ENCODE measurements at regions of chr14 and their contacts with region 1.

Region 1: GRCh38 chr14:35121887-35122695 is at the starts of genes PPP2R3C and PRORP:
- DNase-seq: peak; percentile 80 to 96 (median 93)
- ATAC-seq: peak; percentile 90
- H3K4me3 ChIP-seq: peak within 1 kb of the TSS; percentile 86
- H3K4me3 Mint-ChIP-seq: peak within 1 kb of the TSS; percentile 89 to 100 (median 99)
- H3K27ac ChIP-seq: peak within 1 kb of the TSS; percentile 97
- H3K27ac Mint-ChIP-seq: peak within 1 kb of the TSS; percentile 99 to 100 (median 100)
- H3K4me1 ChIP-seq: peaks cover 16 to 22% of the 10 kb centered on the region in 2 donors
- H3K4me1 Mint-ChIP-seq: peaks cover 39 to 85% (median 73%) of the 10 kb centered on the region in 7 donors
- H3K27me3 ChIP-seq: no peaks in the 10 kb centered on the region
- H3K27me3 Mint-ChIP-seq: peaks cover 0 to 3% (median 0%) of the 10 kb centered on the region in 5 donors
- total RNA-seq, gene PPP2R3C: 31.4 to 43.3 (median 33.5) TPM
- total RNA-seq, gene PRORP: 31.2 to 40.9 (median 38.4) TPM

Region 2: GRCh38 chr14:34539407-34540180 is 582.5 kb before region 1 on chr14 and contains the start of gene EAPP:
- CTCF ChIA-PET with region 1: no interaction called
- POLR2A ChIA-PET with region 1: no interaction called
- intact Hi-C with region 1: loop called (anchors 5 kb)
- DNase-seq: peak; percentile 84 to 95 (median 91)
- ATAC-seq: peak; percentile 100
- H3K4me3 ChIP-seq: peak within 1 kb of the TSS; percentile 100
- H3K4me3 Mint-ChIP-seq: peak within 1 kb of the TSS; percentile 95 to 99 (median 99)
- H3K27ac ChIP-seq: peak within 1 kb of the TSS; percentile 97
- H3K27ac Mint-ChIP-seq: peak within 1 kb of the TSS; percentile 95 to 100 (median 99)
- H3K4me1 ChIP-seq: peaks cover 18 to 24% of the 10 kb centered on the region in 2 donors
- H3K4me1 Mint-ChIP-seq: peaks cover 5 to 45% (median 31%) of the 10 kb centered on the region in 7 donors
- H3K27me3 ChIP-seq: no peaks in the 10 kb centered on the region
- H3K27me3 Mint-ChIP-seq: no peaks in the 10 kb centered on the region
- total RNA-seq, gene EAPP: 34.8 to 84.3 (median 60.9) TPM

Region 3: DNA sequence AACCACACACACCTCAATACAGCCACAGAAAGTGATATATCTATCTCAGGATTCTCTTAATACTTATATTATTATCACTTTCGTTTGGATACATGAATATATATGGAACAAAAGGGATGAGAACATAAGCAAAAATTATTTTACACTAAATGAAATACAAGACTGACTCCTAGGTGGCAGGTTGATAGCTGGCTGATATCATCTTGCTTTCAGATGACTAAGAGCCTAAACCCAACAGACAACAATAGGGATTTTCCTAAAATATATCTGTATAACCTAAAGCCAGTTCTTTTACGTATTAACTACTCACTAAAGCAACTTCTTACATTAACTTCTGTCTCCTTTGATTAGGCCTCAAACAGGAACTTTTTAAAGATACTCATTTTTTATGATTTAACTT is 312.1 kb before region 1 on chr14:
- CTCF ChIA-PET with region 1: no interaction called
- POLR2A ChIA-PET with region 1: no interaction called
- intact Hi-C with region 1: no loop called
- DNase-seq: no peak
- ATAC-seq: no peak
- H3K4me3 ChIP-seq: no peak overlapping the region
- H3K4me3 Mint-ChIP-seq: no peak overlapping the region
- H3K27ac ChIP-seq: no peak overlapping the region
- H3K27ac Mint-ChIP-seq: peak overlapping the region in 2 of 9 donors; percentile 71 to 85
- H3K4me1 ChIP-seq: no peaks in the 10 kb centered on the region
- H3K4me1 Mint-ChIP-seq: peaks cover 7 to 19% (median 15%) of the 10 kb centered on the region in 7 donors
- H3K27me3 ChIP-seq: no peaks in the 10 kb centered on the region
- H3K27me3 Mint-ChIP-seq: no peaks in the 10 kb centered on the region

Region 4: DNA sequence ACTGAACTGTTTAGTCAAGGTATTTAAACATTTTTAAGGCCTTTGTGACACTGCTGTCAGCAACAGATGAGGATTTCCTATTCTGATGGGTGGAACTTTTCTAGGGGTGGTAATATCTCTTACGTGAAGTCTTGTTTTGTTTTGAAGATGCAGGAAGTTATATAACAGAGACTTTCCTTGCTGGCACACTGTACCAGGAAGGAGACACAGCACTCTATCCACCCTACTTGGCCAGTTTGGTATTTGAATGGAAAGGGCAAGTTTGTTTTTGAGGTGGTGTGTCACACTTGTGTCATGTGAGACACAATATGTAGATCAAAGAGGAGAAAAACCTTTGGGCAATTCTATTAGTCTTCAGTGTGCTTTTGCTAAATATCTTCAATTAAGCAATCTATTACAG is 190.9 kb before region 1 on chr14:
- CTCF ChIA-PET with region 1: no interaction called
- POLR2A ChIA-PET with region 1: no interaction called
- intact Hi-C with region 1: loop called in 1 of 2 experiments (anchors 2 kb)
- DNase-seq: peak in 7 of 9 donors; percentile 69 to 89 (median 83)
- ATAC-seq: peak; percentile 95
- H3K4me3 ChIP-seq: peak overlapping the region; percentile 22
- H3K4me3 Mint-ChIP-seq: peak overlapping the region; percentile 31 to 87 (median 76)
- H3K27ac ChIP-seq: peak overlapping the region; percentile 84
- H3K27ac Mint-ChIP-seq: peak overlapping the region; percentile 96 to 100 (median 98)
- H3K4me1 ChIP-seq: peaks cover 28 to 30% of the 10 kb centered on the region in 2 donors
- H3K4me1 Mint-ChIP-seq: peaks cover 15 to 44% (median 37%) of the 10 kb centered on the region in 7 donors
- H3K27me3 ChIP-seq: no peaks in the 10 kb centered on the region
- H3K27me3 Mint-ChIP-seq: no peaks in the 10 kb centered on the region

Region 5: GRCh38 chr14:35159742-35160409 is 37.8 kb after region 1 on chr14:
- CTCF ChIA-PET with region 1: no interaction called
- POLR2A ChIA-PET with region 1: no interaction called
- intact Hi-C with region 1: loop called in 1 of 2 experiments (anchors 5 kb)
- DNase-seq: no peak
- ATAC-seq: no peak
- H3K4me3 ChIP-seq: no peak overlapping the region
- H3K4me3 Mint-ChIP-seq: no peak overlapping the region
- H3K27ac ChIP-seq: no peak overlapping the region
- H3K27ac Mint-ChIP-seq: peak overlapping the region in 1 of 9 donors; percentile 64
- H3K4me1 ChIP-seq: peaks cover 5 to 18% of the 10 kb centered on the region in 2 donors
- H3K4me1 Mint-ChIP-seq: peaks cover 16 to 65% (median 49%) of the 10 kb centered on the region in 7 donors
- H3K27me3 ChIP-seq: no peaks in the 10 kb centered on the region
- H3K27me3 Mint-ChIP-seq: no peaks in the 10 kb centered on the region

Region 6: DNA sequence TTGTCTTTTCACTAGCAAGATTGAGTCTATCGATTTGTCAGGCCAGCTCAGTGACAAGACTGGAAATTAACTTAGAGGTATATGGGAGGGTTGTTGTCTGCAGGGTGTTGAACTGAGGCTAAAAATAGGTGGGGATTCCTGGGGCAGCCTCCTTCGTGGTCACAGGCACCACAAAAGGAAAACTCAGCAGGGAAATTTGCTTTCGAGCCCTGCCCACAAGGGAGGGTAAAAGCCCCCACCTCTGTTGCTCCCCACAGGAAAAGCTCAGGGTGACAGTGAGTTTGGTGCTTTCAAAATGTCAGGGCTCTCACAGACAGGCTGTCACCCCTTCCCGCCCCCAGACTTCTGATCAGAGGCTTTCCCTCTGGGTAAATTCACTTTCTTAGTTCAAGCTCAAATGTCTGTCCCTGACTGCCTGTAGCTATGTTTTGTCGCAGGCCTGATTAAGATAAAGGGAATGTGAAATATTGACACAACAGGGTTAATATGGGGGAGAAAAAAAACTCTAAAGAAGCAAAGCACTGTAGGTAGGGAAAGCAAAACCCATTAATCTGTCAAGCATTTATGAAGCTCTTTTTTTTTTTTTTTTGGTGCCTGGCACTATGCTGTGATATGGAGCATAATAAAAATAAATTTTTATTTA is 294.1 kb after region 1 on chr14:
- CTCF ChIA-PET with region 1: interaction called, 6 read pairs
- POLR2A ChIA-PET with region 1: interaction called, 14 read pairs
- intact Hi-C with region 1: loop called in 1 of 2 experiments (anchors 1 kb)
- DNase-seq: peak in 6 of 9 donors; percentile 18 to 80 (median 30)
- ATAC-seq: peak; percentile 67
- H3K4me3 ChIP-seq: no peak overlapping the region
- H3K4me3 Mint-ChIP-seq: peak overlapping the region; percentile 46 to 81 (median 72)
- H3K27ac ChIP-seq: peak overlapping the region; percentile 73
- H3K27ac Mint-ChIP-seq: peak overlapping the region; percentile 76 to 95 (median 92)
- H3K4me1 ChIP-seq: peaks cover 31 to 32% of the 10 kb centered on the region in 2 donors
- H3K4me1 Mint-ChIP-seq: peaks cover 29 to 48% (median 45%) of the 10 kb centered on the region in 7 donors
- H3K27me3 ChIP-seq: no peaks in the 10 kb centered on the region
- H3K27me3 Mint-ChIP-seq: peaks cover 0 to 7% (median 0%) of the 10 kb centered on the region in 5 donors

Region 7: DNA sequence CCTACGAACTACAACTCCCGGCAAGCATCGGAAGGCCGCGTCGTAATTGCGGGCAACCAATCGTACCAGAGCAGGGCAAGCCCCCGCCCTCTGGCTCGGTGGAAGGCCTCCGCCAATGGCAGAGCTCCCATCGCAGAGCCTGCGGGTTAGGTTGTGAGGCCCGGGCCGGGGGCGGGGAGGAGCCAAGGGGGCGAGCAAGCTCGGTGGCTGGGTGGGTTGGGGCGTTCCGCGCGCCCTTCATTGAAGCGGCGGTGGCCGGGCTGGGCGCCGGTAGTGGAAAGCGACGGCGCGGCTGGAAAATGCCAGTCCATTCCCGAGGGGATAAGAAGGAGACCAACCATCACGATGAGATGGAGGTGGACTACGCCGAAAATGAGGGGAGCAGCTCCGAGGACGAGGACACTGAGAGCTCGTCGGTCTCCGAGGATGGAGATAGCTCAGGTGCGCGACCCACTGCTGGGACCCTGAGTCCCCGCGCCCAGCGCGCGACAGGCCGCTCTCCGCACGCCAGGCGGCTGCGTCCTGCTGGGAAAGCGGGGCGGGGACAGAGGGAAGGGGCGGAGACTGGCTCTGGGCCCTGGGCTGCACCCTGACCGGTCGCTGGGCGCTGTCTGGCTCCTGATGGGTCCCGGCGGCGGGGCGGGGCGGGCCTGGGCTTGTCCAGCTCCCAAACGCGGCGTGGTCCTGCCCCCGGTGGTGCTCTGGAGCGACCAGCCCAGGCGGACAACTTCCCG is 704.3 kb after region 1 on chr14 and contains the start of gene BRMS1L:
- CTCF ChIA-PET with region 1: no interaction called
- POLR2A ChIA-PET with region 1: no interaction called
- intact Hi-C with region 1: loop called (anchors 1 kb)
- DNase-seq: peak; percentile 88 to 97 (median 96)
- ATAC-seq: peak; percentile 99
- H3K4me3 ChIP-seq: peak within 1 kb of the TSS; percentile 95
- H3K4me3 Mint-ChIP-seq: peak within 1 kb of the TSS; percentile 84 to 96 (median 90)
- H3K27ac ChIP-seq: peak within 1 kb of the TSS; percentile 87
- H3K27ac Mint-ChIP-seq: peak within 1 kb of the TSS; percentile 53 to 94 (median 88)
- H3K4me1 ChIP-seq: peaks cover 6 to 8% of the 10 kb centered on the region in 2 donors
- H3K4me1 Mint-ChIP-seq: peaks cover 11 to 31% (median 25%) of the 10 kb centered on the region in 7 donors
- H3K27me3 ChIP-seq: no peaks in the 10 kb centered on the region
- H3K27me3 Mint-ChIP-seq: no peaks in the 10 kb centered on the region
- total RNA-seq, gene BRMS1L: 4.2 to 8.6 (median 5.8) TPM